Activated CD4-positive, alpha-beta memory T cell treated with anti-CD3 and anti-CD28 coated beads for 36 hours (primary cell): ENCODE measurements at regions of chr21 and their contacts with region 1.

Region 1: GRCh38 chr21:45880097-45881068 is 101.2 kb upstream of the COL6A1 start:
- DNase-seq: peak; percentile 86
- H3K4me3 Mint-ChIP-seq: no peak overlapping the region
- H3K27ac Mint-ChIP-seq: peak overlapping the region; percentile 56
- H3K4me1 Mint-ChIP-seq: peaks cover 40% of the 10 kb centered on the region
- H3K27me3 Mint-ChIP-seq: peaks cover 2% of the 10 kb centered on the region

Region 2: DNA sequence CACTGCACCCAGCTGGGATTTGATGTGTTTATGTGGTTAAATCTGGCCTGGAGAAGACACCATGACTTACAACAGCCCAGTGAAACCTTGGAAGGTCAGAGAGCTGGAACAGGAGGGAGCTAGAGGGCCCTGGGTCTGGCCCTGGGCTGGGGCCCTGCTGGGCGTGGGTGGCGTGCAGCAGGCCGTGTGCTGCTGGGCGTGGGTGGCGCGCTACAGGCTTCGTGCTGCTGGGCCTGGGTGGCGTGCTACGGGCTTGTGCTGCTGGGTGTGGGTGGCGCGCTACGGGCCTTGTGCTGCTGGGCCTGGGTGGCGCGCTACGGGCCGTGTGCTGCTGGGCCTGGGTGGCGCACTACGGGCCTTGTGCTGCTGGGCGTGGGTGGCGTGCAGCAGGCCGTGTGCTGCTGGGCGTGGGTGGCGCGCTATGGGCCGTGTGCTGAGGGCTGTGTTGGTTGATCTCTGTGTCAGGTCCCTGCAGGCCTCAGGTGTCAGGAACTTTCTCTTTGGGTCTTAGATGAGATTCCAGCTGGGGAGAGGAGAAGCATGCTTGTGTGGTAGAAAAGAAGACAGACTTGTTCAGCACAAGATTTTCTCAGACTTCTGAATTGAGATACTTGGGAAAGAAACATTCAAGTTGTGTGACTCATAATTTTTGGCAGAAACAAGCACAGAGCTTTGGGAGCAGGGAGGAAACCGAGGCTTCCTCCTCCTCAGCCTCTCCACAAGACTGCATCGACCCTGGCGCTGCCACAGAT is 409.4 kb before region 1 on chr21:
- CTCF ChIA-PET with region 1: no interaction called
- POLR2A ChIA-PET with region 1: no interaction called
- intact Hi-C with region 1: no loop called
- DNase-seq: peak; percentile 46
- H3K4me3 Mint-ChIP-seq: no peak overlapping the region
- H3K27ac Mint-ChIP-seq: peak overlapping the region; percentile 72
- H3K4me1 Mint-ChIP-seq: peaks cover 14% of the 10 kb centered on the region
- H3K27me3 Mint-ChIP-seq: no peaks in the 10 kb centered on the region

Region 3: DNA sequence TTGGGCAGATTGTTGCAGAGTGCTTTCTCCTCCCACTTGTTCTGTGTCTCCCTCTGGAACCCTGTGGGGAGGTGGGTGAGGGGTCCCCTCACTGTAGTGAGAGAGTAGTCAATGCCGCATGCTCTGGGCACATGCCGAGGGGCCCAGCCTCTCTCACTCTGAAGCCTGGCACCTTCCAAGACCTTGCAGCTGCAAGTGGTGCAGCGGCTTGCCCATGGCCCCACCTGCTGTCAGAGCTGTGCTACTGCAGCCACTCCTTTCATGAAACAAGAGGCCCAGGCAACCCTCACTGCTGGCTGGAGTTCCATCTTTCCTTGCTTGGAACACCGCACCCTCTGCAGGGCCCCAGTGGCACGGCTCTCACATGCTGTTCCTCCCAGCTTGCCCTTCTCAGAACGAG is 42.8 kb after region 1 on chr21:
- CTCF ChIA-PET with region 1: interaction called, 10 read pairs
- POLR2A ChIA-PET with region 1: no interaction called
- intact Hi-C with region 1: loop called (anchors 2 kb)
- DNase-seq: peak; percentile 75
- H3K4me3 Mint-ChIP-seq: no peak overlapping the region
- H3K27ac Mint-ChIP-seq: no peak overlapping the region
- H3K4me1 Mint-ChIP-seq: peaks cover 14% of the 10 kb centered on the region
- H3K27me3 Mint-ChIP-seq: no peaks in the 10 kb centered on the region